ENCODE measurements at regions of chr6 and their contacts with region 1.

Region 1: GRCh38 chr6:4135665-4136353 is 434 bp upstream of the ECI2 start:
- DNase-seq: peak; percentile 98
- H3K4me3 ChIP-seq: peak overlapping the region; percentile 40 to 89 (median 82)
- H3K27ac ChIP-seq: peak overlapping the region; percentile 79 to 93 (median 90)
- H3K4me1 ChIP-seq: peaks cover 8 to 53% (median 33%) of the 10 kb centered on the region in 6 donors
- H3K27me3 ChIP-seq: no peaks in the 10 kb centered on the region
- CTCF ChIP-seq: no peak
- POLR2A ChIP-seq: no peak

Region 2: DNA sequence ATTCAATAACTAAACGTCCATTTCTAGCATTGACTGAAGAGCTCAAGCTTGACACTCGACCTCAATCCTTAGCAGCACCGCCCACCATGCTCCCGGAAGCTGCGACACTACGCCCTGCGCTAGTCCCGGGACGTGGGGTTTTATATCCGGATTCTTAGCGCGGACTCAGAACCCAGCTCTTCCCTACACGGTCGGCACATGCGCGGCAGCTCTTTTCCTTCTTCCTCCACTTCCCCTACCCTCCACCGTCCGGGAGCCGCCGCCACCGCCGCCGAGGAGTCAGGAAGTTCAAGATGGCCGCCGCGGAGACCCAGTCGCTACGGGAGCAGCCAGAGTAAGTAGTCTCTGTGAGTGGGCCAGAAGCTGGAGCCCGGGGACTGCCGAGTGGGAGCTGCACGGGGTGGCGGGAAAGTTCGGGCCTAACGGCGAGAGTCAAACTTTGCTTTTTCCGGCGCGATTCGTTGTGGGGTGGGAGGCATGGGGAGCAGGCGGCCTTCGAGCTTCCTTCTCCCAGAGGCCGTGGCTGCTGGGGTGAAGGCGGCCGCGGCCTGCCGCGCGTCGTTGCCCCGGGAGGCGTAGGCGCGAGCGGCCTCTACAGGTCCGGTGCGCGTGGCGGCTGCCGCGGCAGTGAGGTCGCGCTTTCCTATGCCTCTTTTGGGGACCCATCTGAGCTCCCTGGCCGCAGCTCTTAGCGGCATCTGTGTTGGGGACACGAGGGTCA is 114.5 kb before region 1 on chr6:
- intact Hi-C with region 1: loop called (anchors 10 kb)
- DNase-seq: peak; percentile 97
- H3K4me3 ChIP-seq: peak overlapping the region; percentile 67 to 88 (median 80)
- H3K27ac ChIP-seq: peak overlapping the region; percentile 90 to 98 (median 96)
- H3K4me1 ChIP-seq: peaks cover 43 to 88% (median 80%) of the 10 kb centered on the region in 6 donors
- H3K27me3 ChIP-seq: no peaks in the 10 kb centered on the region
- CTCF ChIP-seq: peak in 9 of 11 experiments; percentile 20 to 61 (median 42)
- POLR2A ChIP-seq: peak in 2 of 3 donors; percentile 35 to 65

Region 3: DNA sequence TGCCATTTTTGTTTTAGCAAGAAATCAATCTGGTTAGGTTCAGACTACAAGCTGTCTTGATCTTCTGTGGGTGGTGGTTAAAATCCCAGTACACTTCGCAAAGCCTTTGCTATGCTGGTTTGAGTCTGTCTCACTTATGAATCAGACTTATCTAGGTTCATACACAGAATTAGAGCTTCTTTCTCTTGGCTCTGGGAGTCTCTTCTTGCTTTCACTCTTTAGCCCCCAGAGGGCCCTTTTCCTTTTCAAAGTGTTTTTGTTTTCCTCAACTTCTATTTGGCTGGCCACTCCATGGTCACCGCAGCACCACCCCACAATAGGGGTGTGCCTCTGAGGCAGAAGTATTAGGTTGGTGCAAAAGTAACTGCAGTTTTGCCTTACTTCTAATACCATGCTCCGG is 21.7 kb before region 1 on chr6:
- intact Hi-C with region 1: no loop called
- DNase-seq: no peak
- H3K4me3 ChIP-seq: no peak overlapping the region
- H3K27ac ChIP-seq: no peak overlapping the region
- H3K4me1 ChIP-seq: no peaks in the 10 kb centered on the region
- H3K27me3 ChIP-seq: no peaks in the 10 kb centered on the region
- CTCF ChIP-seq: no peak
- POLR2A ChIP-seq: no peak

Measured in spleen (tissue), 13 donors.